Sciatic nerve (tissue), 2 donors: ENCODE measurements at regions of chr9 and their contacts with region 1.

Region 1: DNA sequence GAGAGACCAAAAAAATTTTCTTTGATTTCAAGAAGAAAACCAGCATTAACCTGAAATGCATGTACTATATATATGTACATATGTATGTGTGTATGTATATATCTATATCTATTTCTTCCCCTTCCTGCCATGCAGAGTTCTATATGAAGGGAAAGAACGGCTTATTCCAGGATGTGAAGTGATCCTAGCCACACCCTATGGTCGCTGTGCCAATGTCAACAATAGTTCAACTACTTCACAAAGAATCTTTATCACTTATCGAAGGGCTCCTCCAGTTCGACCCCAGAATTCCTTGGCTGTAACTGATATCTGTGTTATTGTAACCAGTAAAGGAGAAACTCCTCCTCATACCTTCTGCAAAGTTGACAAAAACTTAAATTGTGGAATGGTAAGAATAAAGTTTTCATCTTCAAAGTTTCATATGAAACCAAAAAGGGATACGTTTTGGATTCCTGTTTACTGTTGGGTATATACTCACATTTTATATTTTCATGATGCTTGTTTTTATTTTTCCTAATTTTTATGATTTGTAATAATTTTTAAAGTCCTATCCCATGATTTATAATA is 56.2 kb downstream of the DENND4C start:
- DNase-seq: no peak
- ATAC-seq: no peak

Region 2: GRCh38 chr9:19271076-19271475 is 15.6 kb before region 1 on chr9:
- intact Hi-C with region 1: no loop called
- DNase-seq: no peak
- ATAC-seq: no peak

Region 3: GRCh38 chr9:20713172-20713571 is 1426.5 kb after region 1 on chr9:
- intact Hi-C with region 1: loop called (anchors 5 kb)
- DNase-seq: no peak
- ATAC-seq: no peak

Region 4: DNA sequence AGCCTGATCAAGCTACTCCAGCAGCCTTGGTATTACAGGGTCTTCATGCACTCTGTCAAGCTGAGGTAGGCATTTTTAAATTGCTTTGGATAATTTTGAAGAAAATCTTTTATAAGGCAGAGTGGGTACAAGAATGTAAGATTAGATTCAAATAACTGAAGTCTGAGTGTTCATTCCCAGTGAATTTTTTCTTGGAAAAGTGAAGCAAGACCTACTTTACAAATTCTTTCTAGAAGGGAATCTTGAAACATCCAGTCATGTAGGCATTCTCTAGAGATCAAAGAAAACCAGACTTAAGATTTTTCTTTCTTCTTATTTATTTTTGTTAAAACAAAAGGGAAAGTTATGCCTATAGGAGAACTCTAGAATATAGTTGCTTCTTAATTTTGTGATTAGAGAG is 1536.3 kb after region 1 on chr9:
- intact Hi-C with region 1: loop called (anchors 10 kb)
- DNase-seq: no peak
- ATAC-seq: no peak

Region 5: DNA sequence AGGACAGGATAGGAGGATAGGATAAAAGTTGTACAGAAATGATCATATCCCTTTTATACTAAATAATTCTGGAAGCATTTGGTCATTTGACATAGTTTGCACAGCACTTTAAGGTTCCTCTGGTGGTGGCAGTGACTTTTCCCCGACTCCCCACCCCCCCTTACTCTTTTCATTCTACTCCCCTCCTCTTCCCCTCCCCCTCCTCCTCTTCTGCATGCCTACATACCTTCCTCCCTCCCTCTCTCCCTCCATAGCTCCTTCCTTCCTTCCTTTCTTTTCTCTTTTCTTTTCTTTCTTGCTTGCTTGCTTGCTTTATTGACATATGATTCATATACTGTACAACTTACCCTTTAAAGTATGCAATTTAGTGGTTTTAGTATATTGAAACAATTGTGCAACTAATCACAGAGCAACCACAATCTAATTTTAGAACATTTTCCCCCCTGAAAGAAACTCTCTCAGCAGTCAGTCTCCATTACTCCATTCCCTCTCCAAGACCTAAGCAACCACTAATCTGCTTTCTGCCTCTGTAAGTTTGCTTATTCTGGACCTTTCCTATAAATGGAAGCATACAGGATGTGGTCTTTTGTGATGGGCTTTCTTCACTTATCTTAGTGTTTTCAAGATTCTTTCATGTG is 1585.7 kb after region 1 on chr9:
- intact Hi-C with region 1: no loop called
- DNase-seq: no peak
- ATAC-seq: no peak